GM12878 (cell line): ENCODE measurements at regions of chr2 and their contacts with region 1.

Region 1: GRCh38 chr2:96225016-96225533 is 16.4 kb upstream of the STARD7 start:
- DNase-seq: peak; percentile 74
- ATAC-seq: peak; percentile 94
- H3K4me3 ChIP-seq: no peak overlapping the region
- H3K27ac ChIP-seq: peak overlapping the region; percentile 94
- H3K4me1 ChIP-seq: peaks cover 17% of the 10 kb centered on the region
- H3K27me3 ChIP-seq: no peaks in the 10 kb centered on the region
- CTCF ChIP-seq: no peak
- EP300 ChIP-seq: peak; percentile 73 to 85; a peak in 3 of 4 replicates
- POLR2A ChIP-seq: peak; percentile 59; the same call in 1 of the 2 replicates
- RAD21 ChIP-seq: no peak

Region 2: DNA sequence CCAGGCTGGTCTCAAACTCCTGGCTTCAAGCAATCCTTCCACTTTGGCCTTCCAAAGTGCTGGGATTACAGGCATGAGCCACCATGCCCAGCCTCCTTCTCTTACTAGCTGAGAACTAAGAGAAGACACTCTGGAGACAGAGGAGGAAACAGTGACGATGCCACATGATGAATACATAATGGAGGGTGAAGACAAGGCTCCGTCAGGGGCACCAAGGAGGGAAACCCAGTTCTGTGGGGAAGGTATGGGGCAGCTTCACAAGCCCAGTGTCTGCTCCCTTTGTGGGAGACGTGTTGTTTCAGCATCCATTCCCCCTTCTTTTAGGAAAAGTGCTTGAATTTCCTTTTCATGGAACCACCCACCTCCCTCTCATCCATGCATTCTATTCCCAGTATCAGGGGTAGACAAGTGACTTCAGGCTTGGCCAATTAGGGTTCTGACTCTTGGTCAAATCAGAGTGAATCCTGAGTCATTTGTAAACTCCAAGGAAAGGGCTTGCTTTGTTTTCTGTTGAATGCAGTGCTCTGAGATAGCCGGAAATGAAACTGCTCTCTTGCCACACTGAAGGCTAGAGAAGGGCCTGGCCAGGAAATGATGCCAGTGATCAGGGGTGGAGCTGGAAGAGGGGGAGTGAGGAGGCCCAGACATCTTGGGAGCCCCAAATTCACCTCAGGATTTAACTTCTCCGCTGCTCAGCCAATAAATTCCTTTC is 17.0 kb after region 1 on chr2:
- CTCF ChIA-PET with region 1: interaction called, 11 read pairs
- POLR2A ChIA-PET with region 1: interaction called, 14 read pairs
- RAD21 ChIA-PET with region 1: interaction called, 3 read pairs
- SMC1A ChIA-PET with region 1: interaction called, 14 read pairs
- in situ Hi-C with region 1: no loop called
- intact Hi-C with region 1: no loop called
- DNase-seq: peak; percentile 78
- ATAC-seq: peak; percentile 98
- H3K4me3 ChIP-seq: peak overlapping the region; percentile 24; the same call in 1 of the 2 replicates
- H3K27ac ChIP-seq: peak overlapping the region; percentile 89
- H3K4me1 ChIP-seq: peaks cover 32% of the 10 kb centered on the region
- H3K27me3 ChIP-seq: no peaks in the 10 kb centered on the region
- CTCF ChIP-seq: no peak
- EP300 ChIP-seq: peak in 1 of 2 experiments; percentile 64; a peak in 1 of 4 replicates
- POLR2A ChIP-seq: peak; percentile 34; the same call in 1 of the 2 replicates
- RAD21 ChIP-seq: 0 out of 2 replicates have a peak, but pooled peaks have one; percentile 17

Region 3: DNA sequence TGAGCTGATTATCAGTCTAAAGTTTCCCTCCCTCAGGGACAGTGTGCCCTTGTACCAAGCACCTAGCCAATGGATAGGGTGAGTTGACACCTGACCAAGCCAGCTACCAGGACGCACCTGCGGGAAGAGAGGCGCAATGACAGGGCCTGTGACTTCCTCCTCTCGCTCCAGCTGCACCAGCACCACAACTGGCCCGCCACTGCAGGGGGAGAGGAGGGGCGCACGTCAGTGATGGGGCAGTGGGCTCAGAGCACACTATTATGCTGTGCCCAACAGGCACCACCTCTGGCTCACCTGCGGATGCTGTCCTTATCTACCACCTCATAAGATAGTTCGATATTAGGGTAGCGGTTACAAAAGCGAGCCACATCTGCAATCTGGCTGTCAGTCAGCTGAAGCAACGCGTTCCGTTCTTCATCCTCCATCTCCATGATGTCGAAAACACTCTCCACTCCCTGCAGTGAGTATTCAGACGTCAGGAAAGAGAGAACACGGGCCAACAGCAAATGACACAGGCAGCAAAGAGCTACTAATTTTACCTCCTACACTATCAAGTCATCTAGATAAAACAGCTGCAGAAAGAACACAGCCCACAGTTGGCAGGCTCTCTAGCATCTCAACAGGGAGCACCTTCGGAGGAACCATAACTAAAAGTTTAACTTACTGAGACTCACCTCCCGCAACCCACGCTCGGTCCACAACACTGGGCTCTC is 51.9 kb after region 1 on chr2:
- CTCF ChIA-PET with region 1: no interaction called
- POLR2A ChIA-PET with region 1: no interaction called
- RAD21 ChIA-PET with region 1: no interaction called
- SMC1A ChIA-PET with region 1: no interaction called
- in situ Hi-C with region 1: no loop called
- intact Hi-C with region 1: no loop called
- DNase-seq: no peak
- ATAC-seq: no peak
- H3K4me3 ChIP-seq: no peak overlapping the region
- H3K27ac ChIP-seq: no peak overlapping the region
- H3K4me1 ChIP-seq: no peaks in the 10 kb centered on the region
- H3K27me3 ChIP-seq: no peaks in the 10 kb centered on the region
- CTCF ChIP-seq: no peak
- EP300 ChIP-seq: no peak
- POLR2A ChIP-seq: no peak
- RAD21 ChIP-seq: no peak